AG04449 (cell line): ENCODE measurements at regions of chr3 and their contacts with region 1.

Region 1: GRCh38 chr3:48439820-48440589 is at the starts of genes CCDC51 and TMA7:
- DNase-seq: peak; percentile 72
- H3K4me3 ChIP-seq: peak within 1 kb of the TSS; percentile 98
- CTCF ChIP-seq: no peak

Region 2: DNA sequence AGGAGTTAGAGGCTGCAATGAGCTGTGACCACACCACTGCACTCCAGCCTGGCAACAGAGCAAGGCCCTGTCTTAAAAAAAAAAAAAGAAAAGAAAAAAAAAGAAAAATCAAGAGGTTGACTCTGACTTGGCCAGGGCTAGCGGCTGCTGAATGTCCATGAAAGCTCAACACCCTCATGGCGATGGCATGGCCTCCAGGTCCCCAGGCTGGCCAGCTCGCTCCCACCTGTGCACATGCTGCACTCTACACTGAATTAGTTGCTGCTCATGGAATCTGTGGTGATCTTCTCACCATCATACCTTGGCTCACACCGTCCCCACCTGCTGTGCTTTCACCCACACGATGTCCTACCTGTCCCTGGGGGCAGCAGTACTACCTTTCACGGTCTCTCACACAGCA is 240.0 kb before region 1 on chr3:
- CTCF ChIA-PET with region 1: interaction called, 139 read pairs
- POLR2A ChIA-PET with region 1: no interaction called
- DNase-seq: no peak
- H3K4me3 ChIP-seq: no peak overlapping the region
- CTCF ChIP-seq: no peak

Region 3: GRCh38 chr3:48256557-48256956 is 183.4 kb before region 1 on chr3:
- CTCF ChIA-PET with region 1: interaction called, 948 read pairs
- POLR2A ChIA-PET with region 1: no interaction called
- DNase-seq: no peak
- H3K4me3 ChIP-seq: no peak overlapping the region
- CTCF ChIP-seq: no peak

Region 4: GRCh38 chr3:48301020-48301796 is 138.8 kb before region 1 on chr3:
- CTCF ChIA-PET with region 1: interaction called, 10 read pairs
- POLR2A ChIA-PET with region 1: no interaction called
- DNase-seq: peak; percentile 45
- H3K4me3 ChIP-seq: peak within 1 kb of the TSS; percentile 85
- CTCF ChIP-seq: no peak

Region 5: GRCh38 chr3:48400824-48401433 is 39.1 kb before region 1 on chr3:
- CTCF ChIA-PET with region 1: interaction called, 749 read pairs
- POLR2A ChIA-PET with region 1: interaction called, 10 read pairs
- DNase-seq: no peak
- H3K4me3 ChIP-seq: no peak overlapping the region
- CTCF ChIP-seq: peak; percentile 64

Region 6: GRCh38 chr3:48465531-48466378 is 25.8 kb after region 1 on chr3:
- CTCF ChIA-PET with region 1: interaction called, 13 read pairs
- POLR2A ChIA-PET with region 1: no interaction called
- DNase-seq: peak; percentile 97
- H3K4me3 ChIP-seq: peak overlapping the region; percentile 57
- CTCF ChIP-seq: peak; percentile 72